ENCODE measurements at regions of chr7 and their contacts with region 1.

Region 1: GRCh38 chr7:45136106-45137060 is 21.2 kb upstream of the RAMP3 start:
- DNase-seq: no peak
- H3K4me3 ChIP-seq: no peak overlapping the region
- H3K27ac ChIP-seq: no peak overlapping the region
- H3K4me1 ChIP-seq: no peaks in the 10 kb centered on the region
- H3K27me3 ChIP-seq: peaks cover 0 to 6% (median 0%) of the 10 kb centered on the region in 4 donors
- CTCF ChIP-seq: peak; percentile 79 to 86 (median 83)
- EP300 ChIP-seq: no peak
- POLR2A ChIP-seq: no peak

Region 2: GRCh38 chr7:44858161-44858560 is 278.2 kb before region 1 on chr7:
- intact Hi-C with region 1: loop called (anchors 5 kb)
- DNase-seq: no peak
- H3K4me3 ChIP-seq: no peak overlapping the region
- H3K27ac ChIP-seq: no peak overlapping the region
- H3K4me1 ChIP-seq: peaks cover 0 to 8% (median 7%) of the 10 kb centered on the region in 4 donors
- H3K27me3 ChIP-seq: no peaks in the 10 kb centered on the region
- CTCF ChIP-seq: peak in 2 of 3 experiments; percentile 13 to 19
- EP300 ChIP-seq: no peak
- POLR2A ChIP-seq: no peak

Region 3: DNA sequence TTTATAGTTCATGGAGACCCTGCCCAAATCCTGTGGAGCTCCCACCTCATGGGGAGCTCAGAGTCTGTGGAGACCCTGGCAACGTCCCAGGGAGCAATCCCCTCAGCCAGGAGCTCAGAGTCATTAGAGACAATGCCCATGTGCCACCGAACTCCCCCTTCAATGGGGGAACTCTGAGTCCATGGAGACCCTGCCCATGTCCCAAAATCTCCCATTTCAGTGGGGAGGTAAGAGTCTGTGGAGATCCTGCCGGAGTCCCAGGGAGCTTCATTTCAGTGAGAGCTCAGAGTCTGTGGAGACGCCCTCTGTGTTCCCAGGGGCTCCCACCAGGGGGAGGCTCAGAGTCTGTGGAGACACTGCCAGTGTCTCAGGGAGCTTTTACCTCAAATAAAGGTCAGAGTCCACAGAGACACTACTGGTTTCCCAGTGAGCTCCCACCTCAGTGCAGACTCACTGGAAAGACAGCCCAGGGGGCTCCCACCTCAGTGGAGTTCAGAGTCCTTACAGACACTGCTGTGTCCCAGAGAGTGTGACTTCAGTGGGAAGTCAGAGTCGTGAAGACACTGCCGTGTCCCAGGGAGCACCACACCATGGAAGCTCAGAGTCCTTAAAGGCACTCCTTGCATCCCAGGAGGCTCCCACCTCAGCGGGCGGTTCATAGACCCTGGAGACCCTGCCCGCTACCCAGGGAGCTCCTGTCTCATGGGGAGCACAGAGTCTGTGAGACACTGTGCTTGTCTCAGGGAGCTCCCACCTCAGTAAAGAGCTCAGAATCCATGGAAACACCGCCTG is 162.6 kb before region 1 on chr7:
- intact Hi-C with region 1: loop called (anchors 5 kb)
- DNase-seq: no peak
- H3K4me3 ChIP-seq: no peak overlapping the region
- H3K27ac ChIP-seq: no peak overlapping the region
- H3K4me1 ChIP-seq: peaks cover 11 to 20% (median 18%) of the 10 kb centered on the region in 4 donors
- H3K27me3 ChIP-seq: no peaks in the 10 kb centered on the region
- CTCF ChIP-seq: peak; percentile 36 to 56 (median 49)
- EP300 ChIP-seq: no peak
- POLR2A ChIP-seq: no peak

Measured in esophagus muscularis mucosa (tissue), 4 donors.